ENCODE measurements at regions of chr22 and their contacts with region 1.

Region 1: GRCh38 chr22:36856121-36856791 is 4.5 kb upstream of the NCF4 start:
- DNase-seq: peak; percentile 37 to 90
- H3K4me3 ChIP-seq: no peak overlapping the region
- H3K27ac ChIP-seq: no peak overlapping the region
- H3K4me1 ChIP-seq: peaks cover 0 to 4% of the 10 kb centered on the region in 2 donors
- H3K27me3 ChIP-seq: no peaks in the 10 kb centered on the region
- CTCF ChIP-seq: peak; percentile 99 to 100 (median 99)

Region 2: DNA sequence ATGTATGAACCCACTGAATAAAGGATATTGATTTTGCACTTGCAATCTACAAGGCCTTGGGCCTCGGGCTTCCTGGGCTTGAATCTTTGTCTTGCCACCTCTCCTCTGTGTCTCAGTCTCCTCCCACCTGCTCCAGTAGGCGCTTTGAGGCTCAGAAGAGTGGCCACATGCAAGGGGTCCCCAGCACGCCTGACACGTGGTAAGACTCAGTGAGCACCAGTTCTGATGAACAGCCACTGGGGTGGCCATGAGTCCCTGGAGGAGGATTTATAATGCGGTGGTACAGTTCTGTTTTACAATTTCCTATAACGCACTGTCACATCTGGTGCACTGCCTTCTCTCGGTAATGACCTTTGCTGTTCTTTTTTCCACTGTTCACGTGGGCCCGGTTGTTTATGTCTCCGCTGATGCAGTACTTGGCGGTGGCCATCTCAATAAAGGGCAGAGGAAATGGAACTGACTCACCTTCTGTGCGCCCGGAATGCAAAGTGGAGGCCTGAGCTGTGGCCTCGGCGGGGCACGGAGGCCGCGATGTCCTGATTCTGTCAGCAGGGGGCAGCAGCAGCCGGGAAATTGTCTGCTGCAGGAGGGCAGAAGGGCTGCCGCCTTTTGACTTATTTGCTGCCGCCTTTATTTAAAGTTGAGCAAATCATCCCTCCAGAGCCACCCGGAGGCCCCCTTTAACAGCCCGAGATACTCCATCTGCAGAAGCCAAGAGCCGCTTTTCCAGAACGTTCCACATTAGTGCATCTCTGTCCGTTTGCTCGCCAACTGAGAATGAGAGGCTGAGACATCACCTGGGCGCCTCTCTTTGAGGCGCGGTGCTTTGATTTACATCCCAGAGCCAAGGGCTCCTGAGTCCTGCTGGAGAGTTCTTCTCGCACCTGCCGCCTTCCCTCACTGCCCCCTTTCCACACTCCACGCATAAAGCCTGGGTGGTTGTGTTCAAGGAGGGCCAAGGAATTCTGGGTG is 74.3 kb before region 1 on chr22:
- intact Hi-C with region 1: loop called (anchors 5 kb)
- DNase-seq: peak; percentile 39 to 90
- H3K4me3 ChIP-seq: no peak overlapping the region
- H3K27ac ChIP-seq: no peak overlapping the region
- H3K4me1 ChIP-seq: no peaks in the 10 kb centered on the region
- H3K27me3 ChIP-seq: no peaks in the 10 kb centered on the region
- CTCF ChIP-seq: peak; percentile 84 to 92 (median 87)

Region 3: GRCh38 chr22:36921309-36922104 is 65.3 kb after region 1 on chr22:
- intact Hi-C with region 1: no loop called
- DNase-seq: peak in 1 of 2 donors; percentile 64
- H3K4me3 ChIP-seq: no peak overlapping the region
- H3K27ac ChIP-seq: no peak overlapping the region
- H3K4me1 ChIP-seq: no peaks in the 10 kb centered on the region
- H3K27me3 ChIP-seq: no peaks in the 10 kb centered on the region
- CTCF ChIP-seq: no peak

Region 4: DNA sequence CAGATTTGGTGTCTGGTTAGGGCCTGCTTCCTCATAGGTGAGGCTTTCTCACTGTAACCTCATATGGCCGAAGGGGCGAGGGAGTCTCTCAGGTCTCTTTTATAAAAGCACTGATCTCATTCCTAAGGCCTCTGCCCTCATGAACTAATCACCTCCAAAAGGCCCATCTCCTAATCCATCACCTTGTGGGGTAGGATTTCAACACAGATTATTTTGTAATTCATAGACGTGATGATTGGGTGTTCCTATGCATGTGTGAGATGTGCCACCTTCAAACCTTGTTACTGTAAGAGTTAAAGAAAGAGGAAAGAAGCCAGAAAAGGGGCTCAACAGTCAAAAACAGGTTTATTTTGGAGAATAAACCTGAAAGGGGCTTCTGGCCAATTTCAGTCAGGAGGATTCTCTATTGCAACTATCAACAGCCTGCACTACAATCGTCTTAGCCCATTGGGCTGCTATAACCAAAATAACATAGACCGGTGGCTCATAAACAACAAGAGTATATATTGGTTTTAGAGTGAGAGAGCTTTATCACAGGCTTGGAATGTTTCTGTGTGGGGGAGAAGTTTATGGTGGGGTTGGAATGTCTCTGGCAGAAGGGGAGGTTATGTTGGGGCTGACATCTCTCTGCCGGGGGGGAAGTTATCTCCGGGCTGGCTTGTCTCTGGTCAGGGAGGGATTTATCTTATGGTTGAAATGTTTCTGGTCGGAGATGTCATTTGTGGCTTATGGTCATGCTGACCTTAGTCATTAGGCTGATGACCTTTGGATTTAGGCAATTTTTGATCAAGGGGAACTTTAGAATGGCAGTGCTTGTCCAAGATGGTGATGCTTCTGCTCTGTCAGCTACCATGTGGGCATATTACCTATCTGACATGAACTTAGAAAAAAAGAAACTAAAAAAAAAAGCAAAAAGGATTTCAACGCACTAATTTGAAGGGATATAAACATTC is 92.3 kb after region 1 on chr22:
- intact Hi-C with region 1: no loop called
- DNase-seq: no peak
- H3K4me3 ChIP-seq: no peak overlapping the region
- H3K27ac ChIP-seq: no peak overlapping the region
- H3K4me1 ChIP-seq: no peaks in the 10 kb centered on the region
- H3K27me3 ChIP-seq: no peaks in the 10 kb centered on the region
- CTCF ChIP-seq: no peak

Region 5: DNA sequence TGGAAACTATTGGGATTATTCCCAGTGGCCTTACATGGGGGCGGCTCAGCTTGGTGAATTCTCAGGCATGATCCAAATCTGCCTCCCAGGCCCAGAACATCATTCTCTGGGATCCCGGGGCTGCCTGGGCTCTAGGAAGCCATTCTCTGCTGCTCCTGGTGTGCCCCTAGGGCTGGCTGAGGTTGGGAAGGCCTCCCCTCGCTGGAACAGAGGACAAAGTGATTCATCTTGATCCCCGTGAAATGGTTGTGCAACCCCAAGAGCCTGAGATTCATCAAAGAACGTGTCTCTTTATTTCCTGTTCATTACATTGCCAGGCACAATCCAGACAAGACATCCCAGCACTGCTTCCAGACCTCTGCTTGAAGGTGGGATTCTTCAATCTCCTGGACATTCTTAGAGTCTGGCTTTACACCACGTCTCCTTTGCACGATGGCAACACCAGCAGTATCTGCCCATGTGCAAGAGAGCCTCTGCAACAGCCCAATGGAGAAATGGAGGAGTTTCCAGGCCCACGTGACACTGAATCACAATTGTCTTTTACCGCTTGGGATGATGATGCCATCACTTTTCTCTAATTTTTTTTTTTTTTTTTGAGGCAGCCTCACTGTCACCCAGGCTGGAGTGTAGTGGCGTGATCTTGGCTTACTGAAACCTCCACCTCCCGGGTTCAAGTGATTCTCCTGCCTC is 110.7 kb after region 1 on chr22:
- intact Hi-C with region 1: no loop called
- DNase-seq: no peak
- H3K4me3 ChIP-seq: no peak overlapping the region
- H3K27ac ChIP-seq: no peak overlapping the region
- H3K4me1 ChIP-seq: no peaks in the 10 kb centered on the region
- H3K27me3 ChIP-seq: no peaks in the 10 kb centered on the region
- CTCF ChIP-seq: no peak

Region 6: DNA sequence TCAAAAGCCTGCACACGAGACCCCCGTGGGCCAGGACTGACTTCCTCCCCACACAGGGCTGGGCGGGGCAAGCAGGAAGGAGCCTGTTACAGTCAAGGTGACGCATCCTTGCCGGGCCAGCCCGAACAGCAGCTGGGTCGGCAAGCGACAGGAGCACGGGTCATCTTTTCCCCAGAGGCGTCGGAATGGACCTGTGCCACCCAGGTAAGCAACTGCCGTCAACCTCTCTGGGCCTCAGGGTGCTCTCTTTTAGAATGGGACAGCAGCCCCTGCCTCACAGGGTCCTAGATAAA is 426.1 kb after region 1 on chr22 and contains the start of gene CYTH4:
- intact Hi-C with region 1: no loop called
- DNase-seq: peak; percentile 58 to 79
- H3K4me3 ChIP-seq: peak within 1 kb of the TSS in 1 of 2 donors; percentile 55
- H3K27ac ChIP-seq: peak within 1 kb of the TSS; percentile 4 to 53
- H3K4me1 ChIP-seq: no peaks in the 10 kb centered on the region
- H3K27me3 ChIP-seq: peaks cover 6% of the 10 kb centered on the region
- CTCF ChIP-seq: no peak
- total RNA-seq, gene CYTH4: 130 TPM

Measured in ascending aorta (tissue), 2 donors.